ENCODE measurements at regions of chr12 and their contacts with region 1.

Region 1: GRCh38 chr12:11633968-11634367 is 15.5 kb upstream of the ETV6 start:
- DNase-seq: peak; percentile 38 to 89
- H3K4me3 ChIP-seq: no peak overlapping the region
- H3K27ac ChIP-seq: peak overlapping the region; percentile 47
- H3K4me1 ChIP-seq: peaks cover 17% of the 10 kb centered on the region
- H3K27me3 ChIP-seq: no peaks in the 10 kb centered on the region
- CTCF ChIP-seq: no peak

Region 2: DNA sequence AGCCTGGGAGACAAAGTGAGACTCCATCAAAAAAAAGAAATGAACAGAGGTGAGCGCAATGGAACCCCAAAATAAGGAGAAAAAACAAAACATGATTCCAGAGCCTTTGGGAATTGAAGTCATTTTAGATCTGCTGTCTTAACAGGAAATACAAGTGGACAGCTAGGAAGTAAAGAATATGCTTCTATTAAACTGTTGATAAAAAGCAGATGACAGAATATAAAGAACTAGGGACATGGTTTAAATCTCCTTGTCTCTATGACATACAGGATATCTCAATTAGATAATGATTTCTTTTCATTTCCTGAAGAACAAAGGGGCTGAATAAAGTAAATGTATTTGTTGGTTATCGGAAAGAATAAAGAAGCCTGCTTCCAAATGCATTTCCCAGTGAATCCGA is 33.8 kb before region 1 on chr12:
- CTCF ChIA-PET with region 1: no interaction called
- POLR2A ChIA-PET with region 1: interaction called, 12 read pairs
- intact Hi-C with region 1: no loop called
- DNase-seq: no peak
- H3K4me3 ChIP-seq: no peak overlapping the region
- H3K27ac ChIP-seq: no peak overlapping the region
- H3K4me1 ChIP-seq: no peaks in the 10 kb centered on the region
- H3K27me3 ChIP-seq: no peaks in the 10 kb centered on the region
- CTCF ChIP-seq: no peak